ENCODE measurements at regions of chr17 and their contacts with region 1.

Region 1: DNA sequence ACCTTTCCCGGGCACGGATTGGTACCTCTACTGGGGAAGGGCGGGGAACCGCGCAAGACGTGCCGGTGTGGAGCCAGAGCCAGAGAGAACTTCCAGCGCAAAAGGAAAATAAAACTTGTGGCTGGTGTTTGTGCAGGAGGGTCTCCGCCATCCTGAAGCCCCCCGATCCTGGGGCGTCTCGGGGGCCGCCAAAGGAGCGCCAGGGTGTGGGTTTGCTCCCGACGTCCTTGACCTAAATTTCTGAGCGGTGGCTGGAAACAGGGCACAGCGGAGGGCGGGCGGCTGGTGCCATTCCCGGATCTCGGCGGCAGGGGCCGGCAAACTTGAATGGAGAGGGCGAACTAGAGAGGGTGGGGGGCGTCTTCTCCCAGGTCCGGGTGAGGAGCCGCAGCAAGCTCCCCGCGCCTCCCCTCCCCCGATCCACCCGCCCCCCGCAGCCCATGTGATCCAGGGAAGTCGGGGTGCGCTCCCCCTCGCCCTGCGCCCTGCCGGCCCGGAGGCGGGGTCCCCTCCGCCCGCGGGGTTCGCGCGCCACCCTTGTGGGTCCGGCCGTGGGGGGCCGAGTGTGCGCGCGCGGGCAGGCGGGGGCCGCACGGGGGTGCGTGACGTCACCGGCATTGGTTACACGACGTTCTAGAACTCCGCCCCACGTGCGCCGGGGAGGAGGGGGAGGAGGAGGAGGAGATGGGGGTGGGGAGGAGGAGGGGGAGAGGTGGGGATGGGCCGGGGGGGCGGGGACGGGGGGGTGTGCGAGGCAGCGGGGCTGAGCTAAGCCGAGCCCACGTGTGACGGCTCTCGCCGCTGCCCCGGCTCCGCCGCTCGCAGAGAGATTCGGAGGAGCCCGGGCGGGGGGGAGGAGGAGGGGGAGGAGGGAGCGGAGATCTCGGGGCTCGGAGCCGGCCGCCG is at the start of gene MSI2:
- DNase-seq: peak; percentile 88
- H3K4me3 Mint-ChIP-seq: peak within 1 kb of the TSS; percentile 90
- H3K27ac Mint-ChIP-seq: peak within 1 kb of the TSS; percentile 86
- H3K4me1 Mint-ChIP-seq: peaks cover 38% of the 10 kb centered on the region
- H3K27me3 Mint-ChIP-seq: no peaks in the 10 kb centered on the region
- total RNA-seq, gene MSI2: 38.8 to 39.0 TPM

Region 2: DNA sequence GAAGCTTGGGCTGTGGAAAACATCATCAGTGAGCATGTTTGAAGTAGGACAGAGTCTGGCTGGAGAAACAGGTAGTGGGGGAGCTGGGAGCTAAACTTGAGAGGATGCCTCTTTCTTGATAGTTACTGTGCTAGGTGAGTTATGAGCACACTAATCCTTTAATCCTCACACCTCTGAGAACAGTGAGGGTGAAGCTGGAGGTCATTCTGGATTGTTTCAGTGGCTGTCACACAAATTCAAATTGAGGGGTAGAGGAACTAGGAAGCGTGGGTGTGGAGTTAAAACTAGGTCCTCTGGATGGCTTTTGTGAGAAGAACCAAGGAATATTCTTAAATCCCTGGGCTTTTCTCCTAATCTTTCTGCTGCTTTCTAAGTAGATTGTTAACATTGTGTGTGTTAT is 167.7 kb before region 1 on chr17:
- CTCF ChIA-PET with region 1: no interaction called
- intact Hi-C with region 1: no loop called
- DNase-seq: no peak
- H3K4me3 Mint-ChIP-seq: no peak overlapping the region
- H3K27ac Mint-ChIP-seq: no peak overlapping the region
- H3K4me1 Mint-ChIP-seq: peaks cover 40% of the 10 kb centered on the region
- H3K27me3 Mint-ChIP-seq: no peaks in the 10 kb centered on the region

Region 3: DNA sequence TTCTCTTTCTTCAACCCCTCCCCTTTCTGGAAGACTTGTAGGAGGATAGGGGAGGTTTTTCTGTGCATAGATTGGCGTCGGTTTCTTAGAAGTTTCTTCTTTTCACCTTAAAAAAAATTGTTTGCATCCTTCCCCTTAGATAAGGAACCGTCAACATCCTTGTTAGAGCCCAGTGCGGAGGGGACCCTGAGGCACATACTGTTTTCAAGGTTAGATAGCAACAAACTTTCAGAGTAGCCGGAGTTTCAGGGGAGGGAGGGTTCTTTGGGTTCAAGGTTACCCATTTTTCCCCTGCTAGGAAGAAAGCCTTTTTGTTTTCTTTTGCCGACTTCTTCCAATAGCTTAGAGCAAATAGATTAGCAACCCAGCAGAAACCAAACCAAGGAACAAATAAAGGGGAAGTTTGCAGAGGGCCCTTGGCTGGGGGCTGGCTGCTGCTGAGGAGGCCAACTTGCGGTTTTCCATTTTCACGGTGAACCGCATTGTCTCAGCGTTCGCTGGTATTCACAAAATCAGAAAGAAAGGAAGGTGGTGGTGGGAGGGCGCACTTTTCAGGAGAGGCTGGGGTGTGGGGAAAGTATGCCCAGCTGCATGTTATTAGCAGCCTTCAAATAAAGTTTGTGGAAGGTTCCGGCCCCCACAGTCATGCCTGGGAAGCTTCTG is 29.1 kb after region 1 on chr17:
- CTCF ChIA-PET with region 1: interaction called, 4 read pairs
- intact Hi-C with region 1: loop called (anchors 2 kb)
- DNase-seq: peak; percentile 65
- H3K4me3 Mint-ChIP-seq: peak overlapping the region; percentile 50
- H3K27ac Mint-ChIP-seq: no peak overlapping the region
- H3K4me1 Mint-ChIP-seq: peaks cover 59% of the 10 kb centered on the region
- H3K27me3 Mint-ChIP-seq: no peaks in the 10 kb centered on the region

Region 4: DNA sequence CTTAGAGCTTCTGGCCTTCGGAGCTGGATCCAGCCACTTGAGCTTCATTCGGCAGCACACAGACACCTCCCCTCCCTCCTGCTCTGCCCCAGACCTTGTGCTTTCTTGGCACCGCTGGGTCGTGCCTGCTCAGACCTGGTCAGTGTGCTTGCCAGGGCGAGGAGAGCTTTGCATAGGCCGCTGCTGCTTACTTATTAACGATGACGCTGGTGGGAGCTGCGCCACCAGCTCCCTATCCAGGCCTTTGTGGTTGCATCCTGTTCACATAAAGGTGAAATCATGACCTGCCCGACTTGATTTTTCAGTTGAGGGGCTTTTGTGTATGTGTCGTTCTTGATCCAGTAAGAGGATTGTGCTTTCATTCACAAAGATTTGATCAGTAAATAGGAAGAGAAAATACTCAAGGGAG is 101.4 kb after region 1 on chr17:
- CTCF ChIA-PET with region 1: no interaction called
- intact Hi-C with region 1: no loop called
- DNase-seq: no peak
- H3K4me3 Mint-ChIP-seq: no peak overlapping the region
- H3K27ac Mint-ChIP-seq: no peak overlapping the region
- H3K4me1 Mint-ChIP-seq: peaks cover 52% of the 10 kb centered on the region
- H3K27me3 Mint-ChIP-seq: no peaks in the 10 kb centered on the region

Region 5: GRCh38 chr17:57463103-57463851 is 207.2 kb after region 1 on chr17:
- CTCF ChIA-PET with region 1: no interaction called
- intact Hi-C with region 1: loop called (anchors 1 kb)
- DNase-seq: peak; percentile 94
- H3K4me3 Mint-ChIP-seq: peak overlapping the region; percentile 8
- H3K27ac Mint-ChIP-seq: peak overlapping the region; percentile 73
- H3K4me1 Mint-ChIP-seq: peaks cover 59% of the 10 kb centered on the region
- H3K27me3 Mint-ChIP-seq: no peaks in the 10 kb centered on the region

Region 6: GRCh38 chr17:57541472-57542394 is 285.7 kb after region 1 on chr17:
- CTCF ChIA-PET with region 1: no interaction called
- intact Hi-C with region 1: no loop called
- DNase-seq: no peak
- H3K4me3 Mint-ChIP-seq: no peak overlapping the region
- H3K27ac Mint-ChIP-seq: no peak overlapping the region
- H3K4me1 Mint-ChIP-seq: peaks cover 19% of the 10 kb centered on the region
- H3K27me3 Mint-ChIP-seq: no peaks in the 10 kb centered on the region